ENCODE measurements at regions of chr1 and their contacts with region 1.

Region 1: DNA sequence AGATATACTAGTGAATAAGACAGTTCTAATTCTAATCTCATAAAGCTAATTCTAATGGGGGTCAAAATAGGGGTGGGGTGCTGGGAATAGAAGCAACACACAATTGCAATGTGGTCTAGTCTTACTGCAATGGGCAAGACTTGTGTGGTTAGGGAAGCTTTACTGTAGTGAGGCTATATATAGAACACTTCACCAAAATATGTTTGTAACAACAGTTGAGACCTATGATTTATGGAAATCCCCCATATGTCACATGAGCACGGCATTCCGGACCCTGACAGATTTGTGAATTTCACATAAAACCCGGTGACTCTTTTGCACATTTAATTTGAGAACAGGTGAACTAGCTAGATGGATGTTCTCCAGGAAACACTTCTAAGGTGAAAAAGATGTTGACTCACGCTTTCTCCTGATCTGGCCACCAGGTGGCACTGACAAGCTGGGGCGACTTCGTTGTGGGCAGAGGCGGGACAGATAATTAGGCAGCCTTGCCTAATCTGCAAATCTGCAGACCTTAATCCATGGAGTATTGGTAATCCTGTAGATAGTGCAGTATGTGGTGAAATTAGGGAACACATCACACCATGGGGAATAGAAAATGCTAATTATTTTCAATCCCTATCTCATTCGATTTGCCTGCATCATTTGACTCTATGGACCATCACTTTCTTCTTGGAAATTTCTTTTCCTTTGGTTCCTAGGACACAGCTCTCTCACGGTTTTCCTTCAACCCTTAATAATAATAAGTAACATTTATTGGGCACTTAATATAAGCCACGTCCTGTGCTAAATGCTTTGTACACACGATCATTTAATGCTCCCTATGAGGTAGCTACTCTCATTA is 37.7 kb downstream of the KIAA0040 start:
- DNase-seq: peak; percentile 48 to 61
- H3K4me3 ChIP-seq: no peak overlapping the region
- H3K27ac ChIP-seq: no peak overlapping the region
- H3K4me1 ChIP-seq: peaks cover 13% of the 10 kb centered on the region; the same call in 1 of the 2 replicates
- H3K27me3 ChIP-seq: 0 out of 2 replicates have a peak, but pooled peaks cover 6% of the 10 kb centered on the region
- CTCF ChIP-seq: peak; percentile 92

Region 2: GRCh38 chr1:175192630-175193526 is 38.0 kb after region 1 on chr1 and contains the start of gene KIAA0040:
- CTCF ChIA-PET with region 1: interaction called, 9 read pairs
- POLR2A ChIA-PET with region 1: no interaction called
- intact Hi-C with region 1: loop called (anchors 2 kb)
- DNase-seq: peak; percentile 83 to 84
- H3K4me3 ChIP-seq: peak within 1 kb of the TSS; percentile 98
- H3K27ac ChIP-seq: peak within 1 kb of the TSS; percentile 77
- H3K4me1 ChIP-seq: peaks cover 34% of the 10 kb centered on the region
- H3K27me3 ChIP-seq: no peaks in the 10 kb centered on the region
- CTCF ChIP-seq: no peak; the same call in 1 of the 2 replicates
- total RNA-seq, gene KIAA0040: 8.8 and 9.5 TPM in 2 replicates

Region 3: DNA sequence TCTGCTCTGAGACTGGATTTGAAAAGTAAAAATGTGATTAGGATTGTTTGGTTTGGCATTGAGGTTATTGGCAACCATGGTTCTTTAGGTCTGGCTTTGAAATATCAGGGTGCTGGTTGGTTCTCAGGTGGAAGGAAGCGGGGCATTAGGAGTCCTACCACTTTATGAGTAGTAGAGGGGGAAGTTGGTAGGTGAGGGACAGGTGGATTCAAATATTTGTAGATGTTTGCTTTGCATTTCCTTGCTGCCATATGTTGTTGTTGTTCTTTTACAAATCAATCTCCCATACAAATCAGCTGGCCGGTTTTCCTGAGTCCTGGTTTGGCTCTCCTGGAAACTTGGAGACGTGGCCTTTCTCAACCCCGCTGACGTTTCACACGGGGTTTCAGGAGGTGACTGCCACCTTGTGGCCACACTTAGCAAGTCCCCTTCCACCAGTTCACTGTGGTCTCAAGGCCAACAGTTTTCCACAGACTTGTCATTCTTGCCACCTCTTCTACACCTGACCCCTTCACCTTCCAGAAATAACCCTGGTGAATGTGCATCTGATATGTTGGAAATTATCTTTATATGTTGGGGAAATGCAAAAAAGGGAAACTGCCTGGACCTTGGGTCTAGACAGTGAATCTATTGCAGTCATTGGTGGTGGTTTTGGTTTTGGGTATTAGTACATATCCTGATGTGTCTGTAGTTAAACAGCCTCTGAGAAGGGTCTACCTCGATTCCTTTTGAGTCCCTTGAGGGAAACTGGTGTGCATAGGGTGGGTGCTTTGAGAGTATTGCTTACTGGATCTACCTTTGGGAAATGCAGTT is 164.8 kb after region 1 on chr1:
- CTCF ChIA-PET with region 1: interaction called, 13 read pairs
- POLR2A ChIA-PET with region 1: no interaction called
- intact Hi-C with region 1: loop called (anchors 1 kb)
- DNase-seq: peak; percentile 44 to 56
- H3K4me3 ChIP-seq: no peak overlapping the region
- H3K27ac ChIP-seq: no peak overlapping the region
- H3K4me1 ChIP-seq: peaks cover 22% of the 10 kb centered on the region
- H3K27me3 ChIP-seq: no peaks in the 10 kb centered on the region
- CTCF ChIP-seq: peak; percentile 90

Region 4: DNA sequence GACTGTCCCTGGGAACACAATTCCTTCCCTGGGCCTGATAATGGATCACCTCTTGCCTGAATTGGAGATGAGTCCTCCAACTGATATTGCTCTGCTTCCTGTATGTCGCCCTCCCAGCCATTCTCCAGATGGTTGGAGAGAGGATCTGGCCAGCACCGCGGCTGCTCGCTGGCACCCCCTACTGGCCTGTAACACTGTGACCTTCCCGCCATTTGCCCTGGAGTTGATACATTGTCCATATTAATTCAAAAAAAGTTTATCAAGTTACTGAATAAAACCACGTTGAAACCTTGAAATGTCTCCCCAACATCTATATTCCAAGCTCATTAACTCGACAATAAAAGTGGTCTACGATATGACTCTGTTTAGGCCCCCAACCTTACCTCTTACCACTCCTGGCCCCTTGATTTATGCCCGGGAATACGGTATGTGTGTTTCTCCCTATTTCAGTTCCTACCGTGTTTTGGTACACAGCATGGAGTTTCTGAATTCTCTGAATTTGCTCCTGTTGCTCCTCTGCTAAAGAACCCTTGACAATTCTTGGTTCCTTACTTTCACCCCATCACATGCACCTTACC is 279.5 kb after region 1 on chr1:
- CTCF ChIA-PET with region 1: no interaction called
- POLR2A ChIA-PET with region 1: no interaction called
- intact Hi-C with region 1: loop called (anchors 5 kb)
- DNase-seq: no peak
- H3K4me3 ChIP-seq: no peak overlapping the region
- H3K27ac ChIP-seq: no peak overlapping the region
- H3K4me1 ChIP-seq: no peaks in the 10 kb centered on the region
- H3K27me3 ChIP-seq: peaks cover 13% of the 10 kb centered on the region; the same call in 1 of the 2 replicates
- CTCF ChIP-seq: peak; percentile 57

Region 5: GRCh38 chr1:176073524-176074157 is 918.8 kb after region 1 on chr1:
- CTCF ChIA-PET with region 1: interaction called, 6 read pairs
- POLR2A ChIA-PET with region 1: no interaction called
- intact Hi-C with region 1: loop called (anchors 5 kb)
- DNase-seq: peak; percentile 12 to 51
- H3K4me3 ChIP-seq: no peak overlapping the region
- H3K27ac ChIP-seq: no peak overlapping the region
- H3K4me1 ChIP-seq: no peaks in the 10 kb centered on the region
- H3K27me3 ChIP-seq: no peaks in the 10 kb centered on the region
- CTCF ChIP-seq: peak; percentile 87

Measured in PC-9 (cell line).